AG04449 (cell line): ENCODE measurements at regions of chr3 and their contacts with region 1.

Region 1: DNA sequence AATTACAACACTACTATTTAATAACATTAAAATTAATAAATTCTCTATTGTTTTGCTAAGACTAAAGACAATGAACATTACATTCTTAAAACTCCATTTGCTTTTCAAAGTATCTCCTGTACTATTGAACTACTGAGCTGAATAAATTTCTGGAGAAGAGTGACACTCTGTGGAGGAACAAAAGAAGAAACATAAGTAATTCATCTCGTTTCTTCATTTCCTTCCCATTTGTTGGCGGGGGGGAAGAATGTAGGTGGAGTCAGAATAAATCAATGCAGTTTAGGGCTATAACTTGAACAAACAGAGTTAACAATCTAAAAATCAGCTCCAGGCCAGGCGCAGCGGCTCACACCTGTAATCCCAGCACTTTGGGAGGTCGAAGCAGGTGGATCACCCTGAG is 32.7 kb downstream of the EFHB start:
- DNase-seq: no peak
- H3K4me3 ChIP-seq: no peak overlapping the region
- CTCF ChIP-seq: no peak

Region 2: GRCh38 chr3:19885468-19885867 is 15.9 kb before region 1 on chr3:
- CTCF ChIA-PET with region 1: interaction called, 61 read pairs
- POLR2A ChIA-PET with region 1: no interaction called
- DNase-seq: no peak
- H3K4me3 ChIP-seq: no peak overlapping the region
- CTCF ChIP-seq: peak; percentile 34

Region 3: GRCh38 chr3:20123131-20123651 is 221.9 kb after region 1 on chr3:
- CTCF ChIA-PET with region 1: no interaction called
- POLR2A ChIA-PET with region 1: no interaction called
- DNase-seq: no peak
- H3K4me3 ChIP-seq: no peak overlapping the region
- CTCF ChIP-seq: no peak